Activated T-helper 1 cell treated with anti-CD3 and anti-CD28 coated beads, Interleukin-12 subunit alpha, Interleukin-12 subunit beta, Interleukin-2, Interleukin-4 antibody, amounts not matched to agents 30 ng/mL and 10 ng/mL and 1 ng/mL, durations not matched to agents 14 hours and 24 hours and 36 hours (primary cell): ENCODE measurements at regions of chr19 and their contacts with region 1.

Region 1: GRCh38 chr19:43575156-43575950 is at the starts of genes PINLYP and XRCC1:
- DNase-seq: peak; percentile 95
- H3K4me3 Mint-ChIP-seq: peak within 1 kb of the TSS; percentile 96
- H3K27ac Mint-ChIP-seq: peak within 1 kb of the TSS; percentile 91
- H3K4me1 Mint-ChIP-seq: peaks cover 25% of the 10 kb centered on the region
- H3K27me3 Mint-ChIP-seq: peaks cover 3% of the 10 kb centered on the region
- total RNA-seq, gene PINLYP: 4.9 and 5.7 TPM in 2 replicates
- total RNA-seq, gene XRCC1: 27.4 and 28.7 TPM in 2 replicates

Region 2: DNA sequence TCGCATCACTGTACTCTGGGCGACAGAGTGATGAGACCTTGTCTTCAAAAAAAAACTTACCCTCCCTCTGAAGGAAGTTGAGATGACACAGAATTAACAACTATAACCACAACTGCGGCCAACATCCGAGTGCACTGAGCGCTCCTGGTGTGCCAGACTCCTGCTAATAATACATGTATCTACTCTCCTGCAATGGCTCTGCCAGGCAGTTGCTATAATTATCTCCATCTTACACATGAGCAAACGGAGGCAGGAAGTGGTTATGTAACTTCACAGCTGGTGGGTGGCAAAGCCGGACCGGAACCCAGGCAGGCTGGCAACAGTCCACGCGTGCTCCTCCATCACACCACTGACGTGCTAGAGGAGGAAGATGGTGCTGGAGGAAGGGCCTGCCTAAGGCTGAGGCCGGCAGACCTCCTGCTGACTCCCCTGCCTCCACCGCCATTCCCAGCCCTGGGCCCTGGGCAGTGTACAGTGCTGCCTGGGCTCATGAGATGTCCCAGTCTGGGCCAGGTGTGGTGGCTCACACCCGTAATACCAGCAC is 12.6 kb before region 1 on chr19:
- intact Hi-C with region 1: loop called (anchors 1 kb)
- DNase-seq: peak; percentile 54
- H3K4me3 Mint-ChIP-seq: peak overlapping the region; percentile 37
- H3K27ac Mint-ChIP-seq: peak overlapping the region; percentile 74
- H3K4me1 Mint-ChIP-seq: peaks cover 32% of the 10 kb centered on the region
- H3K27me3 Mint-ChIP-seq: no peaks in the 10 kb centered on the region

Region 3: DNA sequence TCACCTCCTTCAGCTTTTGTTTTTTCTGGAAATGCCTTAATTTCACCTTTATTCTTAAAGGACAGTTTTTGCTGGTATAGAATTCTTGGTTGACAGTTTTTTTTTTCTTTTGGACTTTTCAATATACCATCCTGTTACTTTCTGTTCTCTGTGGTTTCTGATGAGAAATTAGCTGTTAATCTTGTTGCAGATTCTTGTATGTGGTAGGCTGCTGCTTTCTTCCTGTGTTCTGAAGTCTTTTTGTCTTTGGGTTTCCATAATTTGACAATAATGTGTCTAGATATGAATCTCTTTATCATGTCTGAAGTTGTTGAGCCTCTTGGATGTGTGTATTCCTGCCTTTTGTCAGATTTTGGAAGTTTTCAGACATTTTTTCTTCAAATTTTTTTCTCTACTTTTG is 263.8 kb after region 1 on chr19:
- intact Hi-C with region 1: no loop called
- DNase-seq: no peak
- H3K4me3 Mint-ChIP-seq: no peak overlapping the region
- H3K27ac Mint-ChIP-seq: no peak overlapping the region
- H3K4me1 Mint-ChIP-seq: no peaks in the 10 kb centered on the region
- H3K27me3 Mint-ChIP-seq: no peaks in the 10 kb centered on the region